Dorsolateral prefrontal cortex (tissue), 120 donors: ENCODE measurements at regions of chr3 and their contacts with region 1.

Region 1: GRCh38 chr3:118628704-118629341 is 405.8 kb downstream of the IGSF11 start:
- DNase-seq: peak; percentile 24 to 85 (median 70)
- H3K4me3 ChIP-seq: peak overlapping the region in 11 of 59 donors; percentile 14 to 43 (median 24)
- H3K27ac ChIP-seq: no peak overlapping the region
- H3K27me3 ChIP-seq: no peaks in the 10 kb centered on the region
- CTCF ChIP-seq: peak; percentile 63 to 92 (median 83)

Region 2: GRCh38 chr3:116863822-116864589 is 1764.8 kb before region 1 on chr3:
- intact Hi-C with region 1: loop called in 1 of 2 experiments (anchors 10 kb)
- DNase-seq: peak in 4 of 10 donors; percentile 4 to 40 (median 33)
- H3K4me3 ChIP-seq: peak overlapping the region; percentile 17 to 72 (median 52)
- H3K27ac ChIP-seq: peak overlapping the region in 15 of 59 donors; percentile 2 to 75 (median 34)
- H3K27me3 ChIP-seq: no peaks in the 10 kb centered on the region
- CTCF ChIP-seq: peak; percentile 40 to 81 (median 64)

Region 3: GRCh38 chr3:117637666-117638065 is 991.2 kb before region 1 on chr3:
- intact Hi-C with region 1: loop called in 1 of 2 experiments (anchors 5 kb)
- DNase-seq: no peak
- H3K4me3 ChIP-seq: no peak overlapping the region
- H3K27ac ChIP-seq: no peak overlapping the region
- H3K27me3 ChIP-seq: no peaks in the 10 kb centered on the region
- CTCF ChIP-seq: no peak

Region 4: DNA sequence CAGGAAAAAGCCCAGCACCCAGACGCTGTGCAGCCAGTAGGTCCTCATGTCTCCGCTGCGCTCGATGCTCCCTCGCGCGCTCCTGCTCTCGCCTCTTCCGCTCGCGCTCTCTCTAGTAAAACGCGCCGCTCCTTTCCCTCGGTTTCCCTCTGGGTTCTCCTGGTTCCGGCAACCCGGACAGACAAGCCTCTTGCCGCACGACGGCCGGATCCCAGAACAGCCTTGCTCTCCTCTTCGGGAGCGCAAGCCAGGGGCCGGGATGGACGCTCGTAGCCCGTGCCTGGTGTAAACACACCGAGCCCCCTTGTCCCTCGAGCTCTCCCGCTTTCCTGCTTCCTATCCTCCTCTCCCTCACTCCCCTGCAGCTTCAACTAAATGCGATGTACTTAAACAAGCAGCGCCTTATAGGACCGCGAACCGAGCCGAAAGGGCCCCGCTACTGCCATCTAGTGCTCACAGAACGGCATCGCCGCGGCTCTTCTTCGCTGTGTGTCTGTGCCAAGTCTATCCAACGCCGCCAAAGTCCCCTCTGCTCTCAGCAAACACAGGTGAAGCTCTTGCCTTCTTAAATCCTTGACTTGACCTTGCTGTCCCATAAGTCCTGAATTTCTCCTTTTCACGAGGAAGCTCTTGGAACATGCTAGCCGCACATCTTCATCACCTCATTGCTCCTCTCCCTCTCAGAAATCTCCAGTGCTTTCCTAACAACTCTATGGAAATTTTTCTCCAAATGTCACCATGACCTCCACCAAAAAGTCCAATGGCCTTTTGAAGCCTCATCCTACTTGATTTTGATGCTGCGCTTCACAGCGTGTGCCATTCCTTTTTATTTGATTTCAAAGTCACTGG is 631.4 kb before region 1 on chr3:
- intact Hi-C with region 1: loop called in 1 of 2 experiments (anchors 10 kb)
- DNase-seq: peak; percentile 54 to 91 (median 86)
- H3K4me3 ChIP-seq: peak overlapping the region; percentile 53 to 93 (median 77)
- H3K27ac ChIP-seq: peak overlapping the region in 58 of 59 donors; percentile 45 to 95 (median 85)
- H3K27me3 ChIP-seq: no peaks in the 10 kb centered on the region
- CTCF ChIP-seq: peak; percentile 68 to 96 (median 91)